BJ (cell line): ENCODE measurements at regions of chr7 and their contacts with region 1.

Region 1: GRCh38 chr7:129389829-129390228 is 44.4 kb upstream of the STRIP2 start:
- DNase-seq: no peak
- H3K4me3 ChIP-seq: no peak overlapping the region
- H3K27me3 ChIP-seq: no peaks in the 10 kb centered on the region
- CTCF ChIP-seq: no peak

Region 2: DNA sequence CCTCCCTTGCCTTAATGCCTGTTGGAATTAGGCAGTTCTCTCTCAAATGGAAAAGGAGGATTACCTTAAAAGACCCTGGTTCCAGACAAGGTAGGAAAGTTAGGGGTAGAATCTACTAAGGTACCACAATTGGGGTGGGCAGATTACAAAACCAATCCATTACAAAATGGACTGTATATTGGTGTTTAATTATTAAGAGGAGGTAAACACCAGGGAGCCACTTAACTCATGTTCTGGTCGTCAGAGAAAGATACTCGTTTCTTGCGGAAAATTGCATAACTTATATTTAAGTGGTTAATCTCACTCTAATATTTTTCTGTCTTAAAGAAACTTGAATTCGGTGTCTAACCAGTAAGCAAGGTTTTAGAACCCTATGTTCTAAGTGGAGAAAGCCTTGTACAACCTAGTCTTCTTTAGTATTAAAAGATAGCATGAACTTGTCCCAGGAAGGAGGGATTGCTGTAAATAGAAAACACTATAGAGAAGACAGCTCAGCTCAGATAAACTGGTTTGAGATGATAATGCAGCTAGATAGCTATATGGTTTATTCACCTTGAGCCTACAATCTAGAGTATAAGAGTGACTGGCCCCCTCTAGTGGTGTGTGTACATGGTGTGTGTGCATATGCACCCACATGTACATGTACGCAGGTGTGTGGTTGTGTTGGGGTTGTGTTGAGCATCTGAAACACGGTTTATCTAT is 13.6 kb before region 1 on chr7:
- CTCF ChIA-PET with region 1: interaction called, 31 read pairs
- POLR2A ChIA-PET with region 1: no interaction called
- DNase-seq: no peak
- H3K4me3 ChIP-seq: no peak overlapping the region
- H3K27me3 ChIP-seq: no peaks in the 10 kb centered on the region
- CTCF ChIP-seq: peak; percentile 59

Region 3: DNA sequence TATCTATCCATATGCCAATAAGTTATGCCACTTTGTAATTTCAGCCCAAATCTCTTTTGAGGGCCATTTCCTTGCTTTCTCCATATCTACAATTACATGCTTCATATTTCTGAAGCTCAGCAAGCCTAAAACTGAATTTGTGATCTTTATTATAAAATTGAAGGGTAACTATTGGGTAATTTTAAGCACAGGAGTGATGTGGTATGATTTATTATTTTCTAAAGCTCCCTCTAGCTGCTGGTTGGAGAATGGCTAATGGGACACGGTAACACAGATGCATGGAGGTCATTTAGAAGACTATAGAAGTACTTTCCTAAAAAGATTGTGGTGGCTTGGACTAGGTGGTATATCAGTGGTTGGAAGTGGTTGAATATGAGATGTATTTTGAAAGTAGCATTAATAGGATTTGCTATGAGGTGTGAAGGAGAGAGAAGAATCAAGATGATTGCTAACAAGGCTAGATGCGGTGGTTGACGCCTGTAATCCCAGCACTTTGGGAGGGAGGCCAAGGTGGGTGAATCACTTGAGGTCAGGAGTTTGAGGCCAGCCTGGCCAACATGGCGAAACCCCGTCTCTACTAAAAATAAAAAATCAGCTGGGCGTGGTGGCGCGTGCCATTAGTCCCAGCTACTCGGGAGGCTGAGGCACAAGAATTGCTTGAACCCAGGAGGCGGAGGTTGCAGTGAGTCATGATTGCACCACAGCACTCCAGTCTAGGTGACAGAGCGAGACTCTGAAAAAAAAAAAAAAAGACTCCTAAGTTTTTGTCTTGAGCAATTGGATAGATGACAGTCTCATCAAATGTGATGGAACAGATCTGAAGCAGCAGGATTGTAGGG is 694.4 kb after region 1 on chr7:
- CTCF ChIA-PET with region 1: no interaction called
- POLR2A ChIA-PET with region 1: no interaction called
- DNase-seq: no peak
- H3K4me3 ChIP-seq: no peak overlapping the region
- H3K27me3 ChIP-seq: no peaks in the 10 kb centered on the region
- CTCF ChIP-seq: peak; percentile 30